ENCODE measurements at regions of chr3 and their contacts with region 1.

Region 1: DNA sequence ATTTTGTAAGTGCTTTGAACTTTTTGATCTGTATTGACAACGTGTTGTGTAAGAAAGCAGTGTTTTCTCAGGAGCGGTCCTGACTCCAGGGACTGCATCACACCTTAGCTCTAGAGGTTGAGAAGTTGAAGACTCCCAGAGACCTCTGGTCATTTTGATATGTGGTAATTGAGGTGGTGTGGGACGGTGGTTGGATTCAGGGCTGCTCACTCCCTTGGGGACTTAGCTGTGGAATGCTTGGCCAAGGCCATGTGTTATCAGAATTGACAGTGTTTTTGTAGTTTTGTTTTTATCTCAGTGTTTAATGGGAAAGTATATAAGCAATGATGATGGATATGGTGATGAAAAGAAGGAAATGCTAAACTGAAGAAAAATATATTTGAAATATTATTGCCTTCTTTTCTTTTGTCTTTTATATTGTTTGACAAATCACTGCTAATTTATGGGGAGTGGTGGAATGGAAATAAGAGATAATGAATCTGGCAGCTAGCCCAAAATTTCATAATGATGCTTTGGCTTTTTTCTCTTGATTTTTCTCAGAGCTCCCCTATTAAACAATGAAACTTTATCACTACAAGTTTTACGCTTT is 16.0 kb downstream of the CMSS1 start:
- DNase-seq: no peak
- H3K4me3 ChIP-seq: no peak overlapping the region
- H3K27ac ChIP-seq: no peak overlapping the region
- H3K4me1 ChIP-seq: no peaks in the 10 kb centered on the region
- CTCF ChIP-seq: no peak

Region 2: DNA sequence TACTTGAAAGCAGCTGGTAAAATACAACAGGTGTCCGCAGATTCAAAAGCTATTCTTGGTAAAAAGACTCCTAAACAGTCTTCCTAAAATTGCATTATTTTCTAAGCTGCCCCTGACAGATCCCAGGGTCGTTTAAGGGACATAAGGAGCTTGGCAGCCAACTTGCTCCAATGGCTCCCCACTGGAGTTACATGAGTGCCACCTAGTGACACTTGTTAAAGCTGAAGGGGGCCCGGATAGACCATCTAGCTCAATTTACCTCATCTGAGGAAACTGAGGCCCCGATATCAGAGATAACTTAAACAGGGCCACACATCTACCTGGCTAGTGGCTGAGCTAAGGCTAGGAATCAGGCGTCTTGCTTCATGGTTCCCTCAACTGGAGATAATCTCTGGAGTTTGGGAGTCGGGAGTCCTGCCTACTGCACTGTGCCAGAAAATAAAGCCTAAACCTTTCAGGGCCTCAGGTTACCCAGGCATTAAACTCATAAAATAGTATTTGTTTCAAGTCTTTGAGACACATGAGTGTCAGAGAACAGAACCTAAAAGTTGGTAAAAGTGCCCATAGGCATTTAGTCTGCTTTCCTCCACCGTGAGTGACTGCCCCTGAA is 420.6 kb after region 1 on chr3:
- CTCF ChIA-PET with region 1: interaction called, 7 read pairs
- POLR2A ChIA-PET with region 1: no interaction called
- intact Hi-C with region 1: loop called (anchors 2 kb)
- DNase-seq: peak; percentile 68
- H3K4me3 ChIP-seq: no peak overlapping the region
- H3K27ac ChIP-seq: no peak overlapping the region
- H3K4me1 ChIP-seq: no peaks in the 10 kb centered on the region
- CTCF ChIP-seq: peak; percentile 86

Measured in OCI-LY7 (cell line).